IMR-90 (cell line): ENCODE measurements at regions of chr16 and their contacts with region 1.

Region 1: GRCh38 chr16:24645739-24646645 is 83.5 kb upstream of the TNRC6A start:
- DNase-seq: peak; percentile 100
- ATAC-seq: peak; percentile 95
- H3K4me3 ChIP-seq: no peak overlapping the region
- H3K27ac ChIP-seq: peak overlapping the region; percentile 98
- H3K4me1 ChIP-seq: peaks cover 4% of the 10 kb centered on the region
- H3K27me3 ChIP-seq: no peaks in the 10 kb centered on the region
- CTCF ChIP-seq: no peak
- POLR2A ChIP-seq: no peak
- RAD21 ChIP-seq: peak; percentile 15; the same call in 1 of the 2 replicates

Region 2: GRCh38 chr16:23694644-23695373 is 951.2 kb before region 1 on chr16:
- CTCF ChIA-PET with region 1: no interaction called
- POLR2A ChIA-PET with region 1: no interaction called
- dilution Hi-C with region 1: no loop called
- in situ Hi-C with region 1: no loop called
- intact Hi-C with region 1: no loop called
- DNase-seq: peak; percentile 38
- ATAC-seq: peak; percentile 65
- H3K4me3 ChIP-seq: no peak overlapping the region
- H3K27ac ChIP-seq: no peak overlapping the region; the same call in 1 of the 2 replicates
- H3K4me1 ChIP-seq: peaks cover 11% of the 10 kb centered on the region
- H3K27me3 ChIP-seq: no peaks in the 10 kb centered on the region
- CTCF ChIP-seq: no peak
- POLR2A ChIP-seq: no peak
- RAD21 ChIP-seq: no peak

Region 3: DNA sequence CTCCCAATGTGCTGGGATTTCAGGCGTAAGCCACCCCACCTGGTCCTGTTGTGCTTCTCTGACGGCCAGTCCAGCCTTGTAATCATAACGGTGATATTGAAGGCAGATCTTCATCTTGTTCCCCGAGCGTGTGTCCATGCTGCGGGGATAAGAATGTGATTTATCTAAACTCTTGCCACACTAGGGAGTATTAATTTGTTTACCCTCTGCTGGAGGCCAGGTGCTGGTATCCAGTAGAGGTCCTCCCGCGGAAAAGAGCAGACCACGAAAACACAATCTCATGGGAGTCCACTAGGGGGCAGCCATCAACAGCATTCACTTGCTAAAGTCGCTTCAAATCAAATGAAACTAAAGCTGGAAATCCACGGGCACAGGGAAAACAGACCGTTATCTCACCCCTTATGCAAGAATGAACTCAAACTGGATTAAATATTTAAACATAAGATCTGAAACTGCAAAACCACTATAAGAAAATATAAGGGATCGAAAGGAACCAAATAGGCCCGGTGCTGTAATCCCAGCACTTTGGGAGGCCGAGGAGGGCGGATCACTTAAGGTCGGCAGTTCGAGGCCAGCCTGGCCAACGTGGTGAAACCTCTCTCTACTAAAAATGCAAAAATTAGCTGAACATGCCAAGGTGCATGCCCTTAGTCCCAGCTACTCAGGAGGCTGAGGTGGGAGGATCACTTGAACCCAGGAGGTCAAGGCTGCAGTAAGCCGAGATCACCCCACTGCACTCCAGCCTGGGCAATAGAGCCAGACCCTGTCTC is 128.9 kb before region 1 on chr16:
- CTCF ChIA-PET with region 1: no interaction called
- POLR2A ChIA-PET with region 1: no interaction called
- dilution Hi-C with region 1: no loop called
- in situ Hi-C with region 1: no loop called
- intact Hi-C with region 1: no loop called
- DNase-seq: peak; percentile 85
- ATAC-seq: peak; percentile 95
- H3K4me3 ChIP-seq: no peak overlapping the region
- H3K27ac ChIP-seq: peak overlapping the region; percentile 39; the same call in 1 of the 2 replicates
- H3K4me1 ChIP-seq: no peaks in the 10 kb centered on the region
- H3K27me3 ChIP-seq: peaks cover 7% of the 10 kb centered on the region; the same call in 1 of the 2 replicates
- CTCF ChIP-seq: peak; percentile 93
- POLR2A ChIP-seq: no peak
- RAD21 ChIP-seq: peak; percentile 89

Region 4: DNA sequence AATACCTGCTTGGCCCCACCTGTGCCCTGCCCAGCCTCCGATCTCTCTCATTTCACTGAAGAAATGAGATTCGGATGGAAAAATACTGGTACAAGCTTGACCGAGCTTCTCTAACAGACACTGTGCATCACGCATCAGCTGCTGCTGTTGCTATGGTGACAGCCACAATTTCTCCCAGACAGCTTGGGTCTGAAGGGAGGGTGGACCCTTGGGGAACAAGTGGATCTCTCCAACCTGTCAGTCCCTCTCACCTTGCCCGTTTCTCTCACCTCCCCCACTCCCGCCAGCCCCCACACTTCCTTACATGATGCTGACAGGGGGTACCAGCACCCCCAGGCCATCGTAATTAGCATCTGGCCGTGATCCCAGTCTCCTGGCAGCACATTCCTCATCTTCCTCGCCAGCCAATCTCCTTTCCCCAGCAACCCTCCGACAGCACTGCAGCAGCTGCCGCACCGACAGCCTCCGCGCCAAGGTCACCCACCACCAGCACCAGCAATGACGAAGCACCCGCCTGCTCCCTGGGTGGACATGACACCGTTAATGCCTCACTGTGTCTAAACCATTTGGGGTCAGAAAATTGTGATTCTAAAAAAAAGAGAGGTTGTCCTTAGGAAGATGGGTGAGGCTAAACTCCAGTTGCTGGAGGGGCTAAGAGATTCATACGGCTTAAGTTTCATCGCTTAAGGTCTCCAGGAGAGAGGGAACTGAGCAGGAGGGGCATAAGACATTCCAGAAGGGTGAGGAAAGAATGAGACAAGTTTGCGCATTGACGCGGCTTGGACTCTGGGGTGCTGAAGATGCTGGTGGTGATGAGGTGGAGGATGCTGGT is 24.8 kb after region 1 on chr16:
- CTCF ChIA-PET with region 1: no interaction called
- POLR2A ChIA-PET with region 1: no interaction called
- dilution Hi-C with region 1: no loop called
- in situ Hi-C with region 1: no loop called
- intact Hi-C with region 1: loop called (anchors 1 kb)
- DNase-seq: peak; percentile 92
- ATAC-seq: peak; percentile 76
- H3K4me3 ChIP-seq: no peak overlapping the region
- H3K27ac ChIP-seq: peak overlapping the region; percentile 3
- H3K4me1 ChIP-seq: peaks cover 9% of the 10 kb centered on the region
- H3K27me3 ChIP-seq: no peaks in the 10 kb centered on the region
- CTCF ChIP-seq: no peak
- POLR2A ChIP-seq: 0 out of 2 replicates have a peak, but pooled peaks have one; percentile 49
- RAD21 ChIP-seq: no peak

Region 5: GRCh38 chr16:24689145-24689544 is 43.2 kb after region 1 on chr16:
- CTCF ChIA-PET with region 1: interaction called, 4 read pairs
- POLR2A ChIA-PET with region 1: no interaction called
- dilution Hi-C with region 1: no loop called
- in situ Hi-C with region 1: no loop called
- intact Hi-C with region 1: loop called (anchors 5 kb)
- DNase-seq: peak; percentile 48
- ATAC-seq: peak; percentile 45; the same call in 1 of the 2 replicates
- H3K4me3 ChIP-seq: no peak overlapping the region
- H3K27ac ChIP-seq: no peak overlapping the region
- H3K4me1 ChIP-seq: peaks cover 13% of the 10 kb centered on the region
- H3K27me3 ChIP-seq: no peaks in the 10 kb centered on the region
- CTCF ChIP-seq: peak; percentile 51
- POLR2A ChIP-seq: no peak
- RAD21 ChIP-seq: peak; percentile 55

Region 6: DNA sequence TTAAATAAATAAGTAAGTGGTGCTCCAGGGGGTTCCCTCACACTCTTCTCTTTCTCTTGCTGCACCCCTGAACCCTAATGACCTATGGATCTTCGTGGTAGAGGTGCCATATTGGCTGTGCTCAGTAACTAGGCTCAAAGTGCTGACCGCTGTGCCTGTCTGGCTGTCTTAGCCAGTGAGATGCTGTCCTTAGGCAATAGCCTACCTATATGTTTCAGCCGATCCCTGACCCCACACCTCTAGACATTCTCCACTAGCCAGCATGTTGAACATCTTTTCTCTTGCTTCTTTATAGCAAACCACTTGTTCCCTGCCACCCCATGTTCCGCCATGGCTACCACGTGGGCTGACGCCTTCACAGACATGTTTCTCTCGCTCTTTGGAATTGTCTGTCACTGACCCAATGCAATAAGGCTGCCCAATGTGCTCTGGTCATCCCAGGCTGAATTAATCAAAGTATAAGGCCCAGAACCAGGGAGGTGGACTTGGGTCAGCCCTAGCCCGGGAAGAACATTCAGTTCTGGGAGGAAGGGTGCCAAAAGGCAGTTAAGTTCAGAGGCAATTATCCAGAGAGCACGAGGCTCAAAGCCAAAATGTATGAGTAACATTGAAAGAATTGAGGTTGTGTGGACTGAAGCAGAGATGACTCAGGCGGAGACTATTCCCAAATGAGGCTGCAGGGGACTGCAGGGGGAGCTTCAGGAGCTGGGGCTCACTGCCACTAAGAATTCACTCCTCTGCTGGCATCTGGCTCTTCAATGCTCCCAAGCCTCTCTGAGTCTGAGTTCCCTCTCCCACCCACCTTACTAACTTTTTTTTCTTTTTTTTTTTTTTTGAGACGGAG is 54.8 kb after region 1 on chr16:
- CTCF ChIA-PET with region 1: no interaction called
- POLR2A ChIA-PET with region 1: no interaction called
- dilution Hi-C with region 1: no loop called
- in situ Hi-C with region 1: no loop called
- intact Hi-C with region 1: loop called (anchors 1 kb)
- DNase-seq: peak; percentile 98
- ATAC-seq: peak; percentile 97
- H3K4me3 ChIP-seq: no peak overlapping the region
- H3K27ac ChIP-seq: peak overlapping the region; percentile 92
- H3K4me1 ChIP-seq: peaks cover 10% of the 10 kb centered on the region
- H3K27me3 ChIP-seq: no peaks in the 10 kb centered on the region
- CTCF ChIP-seq: peak; percentile 51
- POLR2A ChIP-seq: no peak
- RAD21 ChIP-seq: peak; percentile 54